AG04449 (cell line): ENCODE measurements at regions of chr10 and their contacts with region 1.

Region 1: DNA sequence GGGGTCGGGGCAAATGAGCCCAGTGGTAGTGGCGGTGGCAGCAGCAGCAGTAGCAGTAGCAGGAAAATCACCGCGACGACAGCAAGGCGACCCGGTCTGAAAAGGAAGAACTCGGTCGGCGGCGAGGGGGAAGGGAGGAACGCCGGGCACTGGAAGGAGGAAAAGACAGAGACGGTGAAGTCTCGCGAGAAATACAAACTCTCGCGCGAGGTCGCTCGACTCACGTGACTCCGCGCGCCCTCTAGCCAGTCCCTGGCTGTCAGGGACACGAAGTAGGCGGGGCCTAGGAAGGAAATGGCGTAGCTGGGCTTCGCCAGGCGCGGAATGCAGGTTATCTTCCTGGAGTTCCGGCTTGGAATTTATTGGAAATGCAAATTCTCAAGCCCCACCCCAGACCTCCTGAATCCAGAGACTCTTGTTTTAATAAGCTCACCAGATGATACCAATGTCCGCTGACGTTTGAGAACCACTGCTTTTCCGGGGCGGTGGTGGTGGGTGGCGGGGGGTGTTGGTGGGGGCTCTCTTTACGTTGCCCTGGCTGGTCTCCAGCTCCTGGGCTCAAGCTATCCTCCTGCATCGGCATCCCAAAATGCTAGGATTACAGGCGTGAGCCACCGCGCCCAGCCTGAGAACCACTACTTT is at the start of gene SMNDC1:
- DNase-seq: peak; percentile 84
- H3K4me3 ChIP-seq: peak within 1 kb of the TSS; percentile 80
- CTCF ChIP-seq: no peak

Region 2: DNA sequence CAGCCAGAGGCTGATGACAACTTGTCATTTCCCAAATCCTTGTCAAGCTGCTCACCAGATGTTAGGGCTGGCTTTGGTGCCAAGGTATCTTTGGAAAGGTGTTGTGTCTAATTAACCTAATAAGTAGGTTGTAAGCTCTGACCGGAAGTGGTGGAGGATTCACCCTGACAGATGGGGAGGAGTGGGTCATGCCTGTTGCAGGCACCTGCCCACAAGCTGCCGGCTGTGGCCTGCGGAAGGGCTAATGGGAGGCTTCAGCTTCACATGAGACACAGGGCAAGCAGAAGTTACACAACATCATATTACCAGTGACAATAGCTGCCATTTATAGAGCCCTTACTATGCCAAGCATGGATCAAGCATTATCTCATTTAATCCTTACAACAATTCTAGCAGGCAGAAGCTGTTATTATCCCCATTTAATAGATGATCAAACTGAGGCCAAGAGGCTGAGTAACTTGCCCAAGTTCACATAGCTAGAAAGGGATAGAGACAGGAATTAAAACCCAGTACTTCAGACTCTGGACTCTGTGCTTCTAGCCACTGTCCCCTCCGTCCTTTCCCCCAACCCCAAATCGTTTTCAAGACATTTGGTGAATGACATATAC is 129.7 kb after region 1 on chr10:
- CTCF ChIA-PET with region 1: no interaction called
- POLR2A ChIA-PET with region 1: no interaction called
- DNase-seq: no peak
- H3K4me3 ChIP-seq: no peak overlapping the region
- CTCF ChIP-seq: no peak

Region 3: DNA sequence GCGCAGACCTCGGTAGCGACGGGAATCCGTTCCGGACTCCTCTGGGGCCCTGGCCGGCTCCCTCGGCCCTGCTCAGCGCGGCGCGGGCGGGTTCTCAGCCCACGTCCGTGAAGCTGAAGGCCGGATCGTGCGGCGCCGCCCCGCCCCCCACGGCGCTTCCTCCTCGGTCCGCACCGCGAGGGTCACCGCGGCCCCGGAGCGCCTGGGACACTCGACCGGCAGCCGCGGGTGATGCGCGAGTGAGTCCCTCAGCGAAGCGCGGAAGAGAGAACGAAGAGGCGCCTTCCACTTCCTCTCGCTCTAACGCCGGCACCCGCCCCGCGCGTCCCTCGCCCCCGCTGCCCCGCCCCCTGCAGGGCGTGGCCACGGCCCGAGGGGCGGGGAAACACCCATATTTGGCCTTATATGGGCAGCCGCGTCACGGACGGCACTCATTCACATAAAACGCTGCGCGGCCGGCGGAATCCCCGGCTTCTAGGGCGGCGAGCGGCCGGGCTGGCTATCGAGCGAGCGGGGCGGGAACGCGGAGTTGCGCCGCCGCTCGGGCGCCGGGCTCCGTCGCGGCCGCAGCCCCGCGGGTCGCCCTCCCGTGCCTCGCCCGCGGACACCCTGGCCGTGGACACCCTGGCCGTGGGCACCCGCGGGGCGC is 192.7 kb after region 1 on chr10 and contains the start of gene DUSP5:
- CTCF ChIA-PET with region 1: interaction called, 13 read pairs
- POLR2A ChIA-PET with region 1: no interaction called
- DNase-seq: no peak
- H3K4me3 ChIP-seq: peak within 1 kb of the TSS; percentile 83
- CTCF ChIP-seq: no peak

Region 4: GRCh38 chr10:110535958-110536891 is 231.3 kb after region 1 on chr10:
- CTCF ChIA-PET with region 1: interaction called, 11 read pairs
- POLR2A ChIA-PET with region 1: no interaction called
- DNase-seq: no peak
- H3K4me3 ChIP-seq: peak overlapping the region; percentile 12; the same call in 1 of the 2 replicates
- CTCF ChIP-seq: peak; percentile 34

Region 5: DNA sequence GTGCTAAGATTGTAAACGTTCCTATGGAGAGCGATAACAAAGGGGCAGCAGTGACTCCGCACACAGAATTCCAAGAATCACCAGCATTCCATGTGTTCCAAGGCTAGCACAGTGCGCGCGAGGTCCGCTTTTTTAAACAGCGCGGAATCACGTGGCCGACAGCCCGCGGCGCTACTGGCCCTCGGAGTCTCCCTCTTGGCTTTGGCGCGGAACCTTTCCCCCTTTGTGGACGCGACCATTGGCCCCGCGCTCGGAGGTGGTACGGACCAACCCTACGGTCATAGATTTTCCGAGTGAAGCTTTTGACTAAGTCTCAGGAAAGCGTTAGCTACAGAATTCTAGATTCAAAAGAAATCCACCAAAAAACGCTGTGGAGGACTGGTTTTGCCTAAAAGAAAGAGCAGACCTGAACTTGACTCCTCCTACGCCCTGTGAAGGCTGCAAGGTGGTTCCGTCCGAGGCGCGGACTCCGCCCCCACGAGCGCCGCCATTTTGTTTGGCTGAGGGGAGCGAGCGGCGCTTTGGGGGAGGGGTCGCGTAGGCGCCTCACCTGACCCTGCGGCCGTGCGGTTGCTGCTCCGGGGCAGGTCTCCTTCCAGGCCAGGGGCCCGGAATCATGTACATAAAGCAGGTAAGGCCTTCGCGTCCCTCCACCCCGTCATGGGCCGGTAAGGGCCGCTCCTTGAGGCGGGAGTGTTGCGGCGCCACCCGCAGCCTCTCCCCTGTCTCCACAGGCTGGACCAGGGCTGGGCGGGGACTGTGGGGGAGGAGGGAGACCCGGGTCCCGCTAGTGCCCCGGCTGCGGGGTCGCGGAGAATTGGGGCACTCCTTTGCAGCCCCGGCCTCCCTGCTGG is 262.5 kb after region 1 on chr10 and contains the start of gene SMC3:
- CTCF ChIA-PET with region 1: interaction called, 29 read pairs
- POLR2A ChIA-PET with region 1: interaction called, 4 read pairs
- DNase-seq: peak; percentile 75
- H3K4me3 ChIP-seq: peak within 1 kb of the TSS; percentile 84
- CTCF ChIP-seq: no peak

Region 6: GRCh38 chr10:110600487-110601101 is 295.7 kb after region 1 on chr10:
- CTCF ChIA-PET with region 1: interaction called, 171 read pairs
- POLR2A ChIA-PET with region 1: interaction called, 4 read pairs
- DNase-seq: no peak
- H3K4me3 ChIP-seq: no peak overlapping the region
- CTCF ChIP-seq: peak; percentile 47

Region 7: DNA sequence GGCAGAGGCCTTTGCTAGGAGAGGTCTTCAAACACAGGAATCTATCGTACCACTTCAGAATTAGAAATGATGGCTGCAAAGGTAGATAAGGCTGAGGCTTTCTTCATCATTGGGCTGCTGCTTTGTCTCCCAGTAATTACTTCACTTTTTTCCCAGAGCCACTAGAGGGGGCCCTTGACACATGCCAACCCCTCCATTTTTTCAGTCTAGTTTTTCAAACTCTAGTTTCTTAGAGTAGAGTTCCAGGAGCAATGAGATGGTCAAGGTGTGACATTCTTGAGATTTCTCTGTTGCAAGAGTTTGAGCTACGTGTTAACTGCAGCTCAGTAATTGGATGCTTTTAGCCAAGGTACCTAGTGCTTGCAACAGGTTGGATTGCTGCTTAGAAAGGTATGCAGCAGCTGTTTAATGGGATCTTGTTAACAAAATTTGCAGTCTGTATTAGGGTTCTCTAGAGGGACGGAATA is 305.4 kb after region 1 on chr10:
- CTCF ChIA-PET with region 1: interaction called, 14 read pairs
- POLR2A ChIA-PET with region 1: no interaction called
- DNase-seq: no peak
- H3K4me3 ChIP-seq: no peak overlapping the region
- CTCF ChIP-seq: peak; percentile 72

Region 8: DNA sequence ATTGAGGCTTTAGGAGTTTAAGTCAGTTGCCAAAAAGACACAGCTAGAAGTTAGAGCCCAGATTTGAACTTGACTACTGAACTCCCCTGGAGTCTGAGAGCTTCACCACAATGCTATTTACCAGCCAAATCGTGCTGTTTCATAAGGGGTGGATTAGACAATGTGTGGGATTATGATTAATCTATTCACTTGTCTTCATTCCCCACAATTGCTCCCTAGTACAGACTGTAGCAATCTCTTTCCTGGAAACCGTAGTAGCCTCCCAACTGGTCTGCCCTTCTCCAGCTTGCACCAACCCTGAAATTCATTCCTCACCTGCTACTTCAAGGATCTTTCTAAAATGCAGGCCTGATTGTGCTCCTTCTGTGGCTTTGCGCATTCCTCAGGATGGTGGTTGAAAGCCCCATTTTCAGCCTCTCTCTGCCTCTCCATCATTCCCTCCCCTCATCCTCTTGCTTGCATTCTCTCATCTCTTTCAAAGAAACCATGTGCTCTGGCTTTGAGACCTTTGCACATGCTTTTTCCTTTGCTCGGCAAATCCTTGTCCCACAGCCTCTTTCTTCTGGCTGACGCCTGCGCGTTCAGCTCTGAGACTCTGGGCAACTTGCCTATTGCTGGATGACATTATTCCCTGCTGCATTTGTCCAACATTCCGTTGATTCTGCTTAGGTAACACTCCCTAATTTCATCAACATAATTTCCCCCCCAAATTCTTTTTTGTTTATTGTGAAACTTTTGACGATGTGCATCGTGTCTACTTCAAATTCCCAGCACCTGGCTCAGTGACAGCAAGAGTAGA is 917.0 kb after region 1 on chr10:
- CTCF ChIA-PET with region 1: no interaction called
- POLR2A ChIA-PET with region 1: no interaction called
- DNase-seq: no peak
- H3K4me3 ChIP-seq: no peak overlapping the region
- CTCF ChIP-seq: no peak